ENCODE measurements at regions of chr5 and their contacts with region 1.

Region 1: GRCh38 chr5:38660194-38660668 is 103.8 kb upstream of the LIFR start:
- DNase-seq: peak in 4 of 5 donors; percentile 18 to 63 (median 40)
- ATAC-seq: peak; percentile 78 to 93 (median 90)
- H3K4me3 ChIP-seq: peak overlapping the region in 6 of 12 donors; percentile 10 to 41 (median 32)
- H3K27ac ChIP-seq: peak overlapping the region in 8 of 12 donors; percentile 18 to 59 (median 44)
- H3K4me1 ChIP-seq: peaks cover 0 to 32% (median 9%) of the 10 kb centered on the region in 12 donors
- H3K27me3 ChIP-seq: no peaks in the 10 kb centered on the region
- CTCF ChIP-seq: no peak
- POLR2A ChIP-seq: peak in 1 of 2 donors; percentile 37

Region 2: GRCh38 chr5:38613988-38614833 is 46.0 kb before region 1 on chr5:
- intact Hi-C with region 1: loop called in 1 of 10 experiments (anchors 5 kb)
- DNase-seq: no peak
- ATAC-seq: no peak
- H3K4me3 ChIP-seq: no peak overlapping the region
- H3K27ac ChIP-seq: no peak overlapping the region
- H3K4me1 ChIP-seq: peaks cover 0 to 18% (median 0%) of the 10 kb centered on the region in 12 donors
- H3K27me3 ChIP-seq: no peaks in the 10 kb centered on the region
- CTCF ChIP-seq: no peak
- POLR2A ChIP-seq: no peak

Region 3: GRCh38 chr5:39092581-39093350 is 432.5 kb after region 1 on chr5:
- intact Hi-C with region 1: no loop called
- DNase-seq: no peak
- ATAC-seq: no peak
- H3K4me3 ChIP-seq: no peak overlapping the region
- H3K27ac ChIP-seq: no peak overlapping the region
- H3K4me1 ChIP-seq: no peaks in the 10 kb centered on the region
- H3K27me3 ChIP-seq: no peaks in the 10 kb centered on the region
- CTCF ChIP-seq: no peak
- POLR2A ChIP-seq: no peak